Activated B cell treated with CpG ODN at 0.5 μM for 24 hours (primary cell): ENCODE measurements at regions of chr6 and their contacts with region 1.

Region 1: GRCh38 chr6:35688581-35689322 is at the start of gene FKBP5:
- DNase-seq: peak; percentile 86
- ATAC-seq: peak; percentile 96
- H3K4me3 Mint-ChIP-seq: peak within 1 kb of the TSS; percentile 93
- H3K27ac Mint-ChIP-seq: peak within 1 kb of the TSS; percentile 87
- H3K4me1 Mint-ChIP-seq: peaks cover 21% of the 10 kb centered on the region
- H3K27me3 Mint-ChIP-seq: no peaks in the 10 kb centered on the region
- CTCF ChIP-seq: no peak
- total RNA-seq, gene FKBP5: 17.1 TPM in 2 replicates

Region 2: DNA sequence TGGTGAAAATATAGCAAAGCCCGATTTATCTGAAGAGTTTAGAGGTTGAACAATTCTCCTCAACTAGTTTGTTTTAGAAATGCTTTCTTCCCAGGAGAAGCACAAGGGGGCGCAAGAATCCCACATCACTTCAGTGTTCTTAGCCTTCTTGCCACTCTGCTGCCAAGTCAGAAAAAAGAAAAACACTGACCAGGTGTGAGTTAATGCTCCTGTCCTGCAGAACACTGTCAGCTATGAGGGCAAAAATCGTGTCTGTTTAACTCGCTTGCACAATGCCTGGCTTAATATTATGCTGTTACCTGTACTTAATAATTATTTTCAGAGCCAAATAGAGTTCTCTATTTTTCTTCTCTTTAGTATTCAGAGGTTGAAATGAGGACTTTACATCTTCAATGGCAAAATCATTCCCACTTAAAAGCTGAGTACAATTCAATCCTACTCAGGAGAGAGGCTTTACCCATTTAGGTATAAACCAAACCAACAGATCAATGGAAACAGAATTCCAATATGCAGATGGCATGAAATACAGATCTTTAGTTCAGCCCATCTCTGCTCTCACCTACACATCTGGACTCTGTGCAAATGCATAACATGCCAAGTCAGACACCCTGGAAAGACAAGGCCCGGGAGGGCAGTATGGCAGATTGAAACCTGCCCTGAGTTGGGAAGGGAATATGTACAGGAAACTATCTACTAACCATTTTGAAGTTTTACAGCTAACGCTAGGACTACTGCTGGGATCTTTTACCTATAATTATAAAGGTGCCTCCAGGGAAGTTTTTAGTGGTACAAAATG is 104.7 kb before region 1 on chr6:
- CTCF ChIA-PET with region 1: no interaction called
- POLR2A ChIA-PET with region 1: no interaction called
- intact Hi-C with region 1: loop called (anchors 5 kb)
- DNase-seq: peak; percentile 31
- ATAC-seq: peak; percentile 68
- H3K4me3 Mint-ChIP-seq: no peak overlapping the region
- H3K27ac Mint-ChIP-seq: no peak overlapping the region
- H3K4me1 Mint-ChIP-seq: peaks cover 10% of the 10 kb centered on the region
- H3K27me3 Mint-ChIP-seq: no peaks in the 10 kb centered on the region
- CTCF ChIP-seq: peak; percentile 70

Region 3: DNA sequence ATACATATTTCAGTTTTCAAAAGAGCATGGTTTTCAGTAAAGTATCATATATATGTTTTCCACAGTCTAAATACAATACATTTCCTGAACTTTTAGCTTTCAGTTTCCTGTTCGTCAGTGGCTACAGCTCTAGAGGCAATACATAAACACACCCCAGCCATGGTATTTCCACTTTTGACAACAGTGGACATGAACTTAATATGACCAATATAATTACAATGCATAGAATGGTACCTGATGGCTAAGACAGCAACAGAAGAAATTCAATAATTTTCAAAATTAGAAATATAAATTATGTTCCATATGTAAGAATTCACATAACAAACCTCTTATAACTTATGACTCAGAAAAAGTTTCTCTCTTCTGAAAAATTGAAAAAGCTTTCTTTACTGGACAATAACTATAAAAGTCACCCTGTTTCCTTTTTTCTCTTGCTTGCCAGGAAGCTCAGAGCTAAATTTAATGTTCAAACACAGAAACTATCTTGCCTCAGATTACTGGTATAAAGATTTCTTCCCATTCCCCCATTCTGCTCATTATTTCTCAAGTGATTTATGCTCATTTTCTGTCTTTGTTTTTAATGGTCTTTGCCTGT is 19.2 kb before region 1 on chr6:
- CTCF ChIA-PET with region 1: interaction called, 3 read pairs
- POLR2A ChIA-PET with region 1: interaction called, 3 read pairs
- intact Hi-C with region 1: loop called (anchors 2 kb)
- DNase-seq: no peak
- ATAC-seq: peak; percentile 49
- H3K4me3 Mint-ChIP-seq: peak overlapping the region; percentile 58
- H3K27ac Mint-ChIP-seq: peak overlapping the region; percentile 69
- H3K4me1 Mint-ChIP-seq: peaks cover 33% of the 10 kb centered on the region
- H3K27me3 Mint-ChIP-seq: no peaks in the 10 kb centered on the region
- CTCF ChIP-seq: no peak

Region 4: DNA sequence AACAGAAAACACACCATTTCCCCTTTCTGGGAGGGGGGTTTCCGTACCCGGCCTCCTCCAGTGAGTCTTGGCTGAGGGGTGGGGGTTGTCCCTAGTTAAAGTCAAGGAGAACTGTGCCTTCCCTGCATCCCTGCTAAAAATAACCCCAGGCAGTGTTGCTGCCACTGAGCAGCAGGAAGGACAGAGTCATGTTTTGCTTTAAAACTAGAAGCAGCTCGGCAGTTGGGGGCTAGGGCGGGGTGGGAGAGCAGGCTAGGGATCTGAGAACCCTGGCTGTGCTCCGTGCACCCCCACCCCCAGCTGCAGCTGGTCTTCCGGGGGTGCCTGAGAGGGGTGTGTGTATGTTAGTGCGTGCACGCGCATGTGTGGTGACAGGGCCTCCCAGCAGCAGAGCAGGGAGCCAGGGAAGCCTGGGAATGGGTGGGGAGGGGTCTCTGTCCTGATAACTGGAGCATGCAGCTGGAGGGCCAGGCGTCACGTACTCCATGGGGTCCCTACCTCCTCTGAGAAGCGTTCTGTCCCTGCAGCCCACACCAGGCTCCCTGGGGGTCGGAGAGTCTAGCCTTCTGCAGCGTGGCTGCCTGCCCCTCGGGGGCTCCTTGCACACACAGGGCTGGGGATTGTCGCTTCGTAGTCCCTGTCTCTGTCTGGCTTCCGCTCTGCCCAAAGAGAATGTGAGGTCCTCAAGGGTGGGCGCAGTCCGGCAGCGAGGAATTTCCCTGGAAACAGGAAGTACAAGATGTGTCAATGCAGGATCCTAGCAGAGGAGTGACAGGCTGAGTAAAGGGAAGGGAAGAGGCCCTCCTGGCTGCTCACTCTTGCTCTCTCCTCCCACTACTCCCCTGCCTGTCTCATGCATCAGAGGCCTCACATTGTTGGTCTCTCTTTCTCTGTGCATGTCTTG is 31.3 kb after region 1 on chr6:
- CTCF ChIA-PET with region 1: no interaction called
- POLR2A ChIA-PET with region 1: interaction called, 4 read pairs
- intact Hi-C with region 1: loop called (anchors 2 kb)
- DNase-seq: peak; percentile 44
- ATAC-seq: peak; percentile 78
- H3K4me3 Mint-ChIP-seq: peak overlapping the region; percentile 75
- H3K27ac Mint-ChIP-seq: peak overlapping the region; percentile 89
- H3K4me1 Mint-ChIP-seq: peaks cover 48% of the 10 kb centered on the region
- H3K27me3 Mint-ChIP-seq: no peaks in the 10 kb centered on the region
- CTCF ChIP-seq: no peak